A549 (cell line): ENCODE measurements at regions of chr10 and their contacts with region 1.

Region 1: DNA sequence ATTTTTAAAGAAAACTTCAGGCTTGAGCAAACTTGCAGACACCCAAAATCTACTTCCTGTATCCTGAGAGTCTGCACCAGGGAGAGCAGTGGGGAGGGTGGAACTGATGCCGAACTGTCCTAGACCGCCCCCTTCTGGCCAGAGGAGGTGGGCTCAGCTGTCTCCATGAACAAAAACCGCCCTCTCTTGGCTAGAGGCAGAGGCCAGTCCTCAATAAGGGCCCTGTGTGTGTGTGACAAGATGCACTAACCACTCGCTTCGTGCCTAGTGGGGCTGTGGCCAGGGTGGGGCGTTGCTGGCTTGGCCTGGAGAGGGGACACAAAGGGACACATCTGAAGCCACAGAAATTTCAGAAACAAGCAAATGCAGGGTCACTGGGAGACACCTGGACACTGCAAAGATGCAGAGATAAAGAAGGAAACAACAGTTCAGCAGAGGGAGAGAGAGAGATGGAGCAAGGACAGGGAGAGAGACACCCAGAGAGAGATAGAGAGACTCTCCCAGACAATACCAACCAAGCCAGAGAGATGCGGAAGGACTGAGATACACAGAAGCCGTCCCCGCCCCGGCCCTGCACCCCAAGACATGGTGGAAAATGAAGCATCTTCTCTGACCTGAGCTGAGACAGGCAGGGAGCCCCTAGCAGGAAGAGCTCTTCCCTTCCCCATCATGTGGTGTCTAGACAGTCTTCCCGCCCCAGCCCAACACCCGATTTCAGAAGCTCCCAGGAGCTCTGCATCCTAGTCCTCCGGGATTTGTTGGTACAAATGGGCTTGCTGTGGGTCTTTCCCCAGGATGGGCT is 22.7 kb upstream of the FXYD4 start:
- DNase-seq: peak; percentile 87 to 92
- ATAC-seq: peak; percentile 99
- H3K4me3 ChIP-seq: no peak overlapping the region
- H3K27ac ChIP-seq: peak overlapping the region; percentile 56 to 71
- H3K4me1 ChIP-seq: peaks cover 30% of the 10 kb centered on the region
- CTCF ChIP-seq: peak; percentile 97
- EP300 ChIP-seq: no peak
- POLR2A ChIP-seq: no peak
- RAD21 ChIP-seq: peak; percentile 98 to 99

Region 2: DNA sequence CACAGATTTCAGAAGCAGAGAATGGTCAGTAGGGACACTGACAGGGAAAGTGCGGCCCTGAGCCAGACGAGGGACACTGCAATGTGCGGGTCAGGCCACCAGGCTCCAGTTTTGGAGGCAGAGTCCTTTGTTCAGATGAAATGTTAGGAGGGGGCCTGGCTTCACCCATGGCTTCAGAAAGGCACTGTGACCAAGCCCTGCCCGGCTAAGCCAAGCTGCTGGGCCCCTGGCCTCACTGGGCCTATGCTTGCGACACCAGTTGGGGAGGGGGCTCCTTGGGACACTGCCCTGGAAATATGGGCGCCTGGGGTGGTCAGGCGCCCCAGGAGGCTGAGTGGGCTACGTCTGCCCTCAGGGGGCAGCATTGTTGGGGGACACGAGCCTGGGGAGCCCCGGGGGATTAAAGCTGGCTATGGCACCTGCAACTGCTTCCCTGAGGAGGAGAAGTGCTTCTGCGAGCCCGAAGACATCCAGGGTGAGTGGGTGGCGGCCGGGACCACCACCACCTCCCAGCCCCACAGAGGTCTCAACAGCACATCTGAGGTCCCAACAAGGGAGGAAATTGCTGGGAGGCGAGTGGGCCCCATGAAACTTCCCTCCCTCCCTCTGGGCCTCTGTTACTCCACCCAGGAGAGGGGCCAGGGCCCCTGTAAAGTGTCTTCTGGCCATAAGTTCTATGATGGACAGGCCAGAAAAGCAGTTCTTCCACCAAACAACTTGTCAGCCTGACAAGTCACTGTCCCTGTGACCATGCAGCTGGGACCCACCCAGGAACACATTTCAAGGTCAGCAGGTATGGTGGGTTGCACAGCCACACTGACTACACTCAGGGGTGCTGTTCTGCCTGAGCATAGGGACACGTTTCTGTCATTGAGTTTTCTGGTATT is 235.3 kb before region 1 on chr10:
- CTCF ChIA-PET with region 1: no interaction called
- POLR2A ChIA-PET with region 1: no interaction called
- DNase-seq: no peak
- ATAC-seq: no peak
- H3K4me3 ChIP-seq: no peak overlapping the region
- H3K27ac ChIP-seq: no peak overlapping the region
- H3K4me1 ChIP-seq: no peaks in the 10 kb centered on the region
- CTCF ChIP-seq: no peak
- EP300 ChIP-seq: no peak
- POLR2A ChIP-seq: no peak
- RAD21 ChIP-seq: no peak

Region 3: GRCh38 chr10:43265799-43266721 is 82.7 kb before region 1 on chr10:
- CTCF ChIA-PET with region 1: interaction called, 34 read pairs
- POLR2A ChIA-PET with region 1: no interaction called
- DNase-seq: peak; percentile 77 to 96
- ATAC-seq: peak; percentile 88 to 94
- H3K4me3 ChIP-seq: peak overlapping the region; percentile 67
- H3K27ac ChIP-seq: peak overlapping the region; percentile 75 to 85
- H3K4me1 ChIP-seq: peaks cover 13% of the 10 kb centered on the region; the same call in 1 of the 3 replicates
- CTCF ChIP-seq: peak; percentile 53
- EP300 ChIP-seq: no peak
- POLR2A ChIP-seq: no peak
- RAD21 ChIP-seq: peak; percentile 69 to 72

Region 4: DNA sequence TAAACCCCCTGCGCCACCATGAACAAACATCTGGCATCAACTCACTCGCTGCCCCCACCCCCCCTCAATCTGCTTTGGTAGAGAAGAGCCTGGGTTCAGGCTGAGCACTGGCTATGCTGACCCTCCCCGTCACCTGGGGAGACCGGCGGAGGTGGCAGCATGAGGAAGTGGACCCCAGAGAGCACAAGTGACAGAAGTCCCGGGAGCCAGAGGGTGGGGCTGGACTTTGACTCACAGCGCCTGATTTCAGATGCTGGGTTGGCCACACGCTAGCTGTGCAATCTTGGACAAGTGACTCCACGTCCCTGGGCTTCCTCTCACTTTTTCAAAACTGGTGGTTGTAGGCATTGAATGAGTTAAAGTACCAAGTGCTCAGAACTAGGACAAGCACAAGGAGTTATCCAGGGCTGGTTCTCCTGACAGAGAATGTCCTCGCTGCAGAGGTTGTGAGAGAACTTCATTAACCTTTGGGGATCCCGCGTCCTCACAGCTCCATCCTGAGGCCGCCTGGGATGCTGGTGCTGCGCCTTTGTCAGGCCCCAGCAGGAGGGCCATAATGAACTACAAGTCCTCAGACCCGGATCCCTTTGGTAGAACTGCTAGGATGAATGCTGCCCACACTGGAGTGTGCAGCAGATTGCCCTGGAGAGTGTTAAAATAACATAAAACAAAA is 33.0 kb before region 1 on chr10:
- CTCF ChIA-PET with region 1: interaction called, 14 read pairs
- POLR2A ChIA-PET with region 1: no interaction called
- DNase-seq: no peak
- ATAC-seq: no peak
- H3K4me3 ChIP-seq: no peak overlapping the region
- H3K27ac ChIP-seq: peak overlapping the region in 1 of 2 experiments; percentile 1; a peak in 1 of 6 replicates
- H3K4me1 ChIP-seq: peaks cover 5% of the 10 kb centered on the region; the same call in 1 of the 3 replicates
- CTCF ChIP-seq: no peak
- EP300 ChIP-seq: no peak
- POLR2A ChIP-seq: no peak
- RAD21 ChIP-seq: no peak

Region 5: GRCh38 chr10:43380610-43381222 is 32.0 kb after region 1 on chr10:
- CTCF ChIA-PET with region 1: interaction called, 10 read pairs
- POLR2A ChIA-PET with region 1: no interaction called
- DNase-seq: peak; percentile 60 to 63
- ATAC-seq: peak; percentile 58 to 67
- H3K4me3 ChIP-seq: no peak overlapping the region
- H3K27ac ChIP-seq: peak overlapping the region; percentile 79 to 80
- H3K4me1 ChIP-seq: peaks cover 28% of the 10 kb centered on the region
- CTCF ChIP-seq: no peak; the same call in 2 of the 3 replicates
- EP300 ChIP-seq: no peak
- POLR2A ChIP-seq: no peak
- RAD21 ChIP-seq: no peak

Region 6: DNA sequence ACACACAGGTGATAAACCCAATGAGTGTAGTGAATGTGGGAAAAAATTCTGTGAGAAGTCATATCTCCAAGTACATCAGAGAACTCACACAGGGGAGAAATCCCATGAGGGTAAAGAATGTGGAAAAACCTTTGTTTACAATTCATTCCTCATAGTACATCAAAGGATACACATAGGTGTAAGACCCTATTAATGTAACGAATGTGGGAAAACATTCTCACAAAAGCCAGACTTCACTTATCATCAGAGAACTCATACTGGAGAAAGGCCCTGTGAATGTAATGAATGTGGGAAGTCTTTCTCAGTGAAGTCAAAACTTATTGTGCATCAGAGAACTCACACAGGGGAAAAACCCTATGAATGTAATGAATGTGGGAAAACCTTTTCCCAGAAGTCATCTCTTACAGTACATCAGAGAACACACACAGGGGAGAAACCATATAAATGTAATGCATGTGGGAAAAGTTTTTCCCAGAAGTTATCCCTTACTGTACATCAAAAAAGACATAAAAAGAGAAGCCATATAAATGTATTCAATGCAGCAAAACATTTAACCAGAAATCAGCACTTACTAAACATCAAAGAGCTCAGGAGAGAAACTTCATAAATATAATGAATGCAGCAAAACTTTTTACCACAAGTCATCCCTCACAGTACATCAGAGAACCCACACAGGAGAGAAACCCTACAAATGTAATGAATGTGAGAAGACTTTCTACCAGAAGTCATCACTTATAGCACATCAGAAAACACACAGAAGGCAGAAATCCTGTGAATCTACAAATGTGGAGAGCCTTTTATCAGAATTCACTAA is 175.9 kb after region 1 on chr10:
- CTCF ChIA-PET with region 1: no interaction called
- POLR2A ChIA-PET with region 1: no interaction called
- DNase-seq: peak in 1 of 2 experiments; percentile 6
- ATAC-seq: no peak
- H3K4me3 ChIP-seq: no peak overlapping the region
- H3K27ac ChIP-seq: no peak overlapping the region
- H3K4me1 ChIP-seq: no peaks in the 10 kb centered on the region
- CTCF ChIP-seq: no peak
- EP300 ChIP-seq: no peak
- POLR2A ChIP-seq: no peak
- RAD21 ChIP-seq: no peak